PC-3 (cell line): ENCODE measurements at regions of chrX and their contacts with region 1.

Region 1: GRCh38 chrX:131841496-131842410 is 181.3 kb upstream of the STK26 start:
- DNase-seq: peak; percentile 78
- ATAC-seq: peak; percentile 73
- H3K4me3 ChIP-seq: peak overlapping the region; percentile 58
- H3K27ac ChIP-seq: peak overlapping the region; percentile 19; the same call in 1 of the 2 replicates
- H3K4me1 ChIP-seq: peaks cover 20% of the 10 kb centered on the region
- H3K27me3 ChIP-seq: no peaks in the 10 kb centered on the region
- CTCF ChIP-seq: peak; percentile 85

Region 2: GRCh38 chrX:131792789-131793462 is 48.8 kb before region 1 on chrX:
- CTCF ChIA-PET with region 1: no interaction called
- POLR2A ChIA-PET with region 1: no interaction called
- intact Hi-C with region 1: no loop called
- DNase-seq: peak; percentile 43
- ATAC-seq: no peak; the same call in 1 of the 2 replicates
- H3K4me3 ChIP-seq: no peak overlapping the region
- H3K27ac ChIP-seq: no peak overlapping the region
- H3K4me1 ChIP-seq: no peaks in the 10 kb centered on the region
- H3K27me3 ChIP-seq: no peaks in the 10 kb centered on the region
- CTCF ChIP-seq: peak; percentile 31; the same call in 1 of the 2 replicates

Region 3: GRCh38 chrX:132071260-132071659 is 229.5 kb after region 1 on chrX:
- CTCF ChIA-PET with region 1: interaction called, 6 read pairs
- POLR2A ChIA-PET with region 1: no interaction called
- intact Hi-C with region 1: loop called (anchors 1 kb)
- DNase-seq: peak; percentile 37
- ATAC-seq: peak; percentile 45; the same call in 1 of the 2 replicates
- H3K4me3 ChIP-seq: no peak overlapping the region
- H3K27ac ChIP-seq: no peak overlapping the region
- H3K4me1 ChIP-seq: peaks cover 16% of the 10 kb centered on the region
- H3K27me3 ChIP-seq: no peaks in the 10 kb centered on the region
- CTCF ChIP-seq: peak; percentile 58

Region 4: DNA sequence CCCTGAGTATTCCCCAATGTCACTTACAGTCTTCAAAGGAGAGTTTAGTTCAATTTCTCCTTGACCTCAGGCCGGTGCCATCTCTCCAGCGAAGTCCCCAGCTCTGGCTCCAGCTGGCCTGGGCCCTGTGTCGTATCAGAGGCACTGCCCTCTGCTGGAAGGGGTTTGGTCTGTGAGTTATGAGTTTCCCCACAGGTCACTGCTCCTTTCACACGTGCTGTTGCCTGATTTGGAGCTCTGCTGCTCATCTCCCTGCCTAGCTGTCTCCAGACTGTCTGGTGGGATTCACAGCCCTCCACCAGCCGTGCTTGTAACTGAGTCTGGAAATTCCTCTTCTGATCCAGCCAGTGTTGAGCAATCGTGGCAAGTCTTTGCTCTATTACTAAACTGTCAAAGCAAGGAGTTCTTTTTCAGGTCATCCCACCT is 377.6 kb after region 1 on chrX and contains the start of gene RAP2C:
- CTCF ChIA-PET with region 1: interaction called, 6 read pairs
- POLR2A ChIA-PET with region 1: no interaction called
- intact Hi-C with region 1: loop called (anchors 5 kb)
- DNase-seq: peak; percentile 78
- ATAC-seq: peak; percentile 56
- H3K4me3 ChIP-seq: peak within 1 kb of the TSS; percentile 92
- H3K27ac ChIP-seq: peak within 1 kb of the TSS; percentile 72
- H3K4me1 ChIP-seq: 0 out of 2 replicates have a peak, but pooled peaks cover 19% of the 10 kb centered on the region
- H3K27me3 ChIP-seq: no peaks in the 10 kb centered on the region
- CTCF ChIP-seq: peak; percentile 72
- total RNA-seq, gene RAP2C: 13.0 and 13.8 TPM in 2 replicates